HepG2 (cell line): ENCODE measurements at regions of chr14 and their contacts with region 1.

Region 1: GRCh38 chr14:21014761-21015190 is 10.1 kb downstream of the NDRG2 start:
- DNase-seq: peak; percentile 94
- ATAC-seq: peak; percentile 90
- H3K4me3 ChIP-seq: no peak overlapping the region
- H3K27ac ChIP-seq: no peak overlapping the region
- H3K4me1 ChIP-seq: peaks cover 36% of the 10 kb centered on the region
- H3K27me3 ChIP-seq: peaks cover 0 to 3% of the 10 kb centered on the region in 2 experiments; a peak in 1 of 5 replicates
- CTCF ChIP-seq: peak; percentile 99
- EP300 ChIP-seq: peak in 1 of 2 experiments; percentile 40; a peak in 1 of 4 replicates
- POLR2A ChIP-seq: 0 out of 4 replicates have a peak, but pooled peaks of 1 of the 2 experiments have one; percentile 23
- RAD21 ChIP-seq: peak; percentile 99

Region 2: DNA sequence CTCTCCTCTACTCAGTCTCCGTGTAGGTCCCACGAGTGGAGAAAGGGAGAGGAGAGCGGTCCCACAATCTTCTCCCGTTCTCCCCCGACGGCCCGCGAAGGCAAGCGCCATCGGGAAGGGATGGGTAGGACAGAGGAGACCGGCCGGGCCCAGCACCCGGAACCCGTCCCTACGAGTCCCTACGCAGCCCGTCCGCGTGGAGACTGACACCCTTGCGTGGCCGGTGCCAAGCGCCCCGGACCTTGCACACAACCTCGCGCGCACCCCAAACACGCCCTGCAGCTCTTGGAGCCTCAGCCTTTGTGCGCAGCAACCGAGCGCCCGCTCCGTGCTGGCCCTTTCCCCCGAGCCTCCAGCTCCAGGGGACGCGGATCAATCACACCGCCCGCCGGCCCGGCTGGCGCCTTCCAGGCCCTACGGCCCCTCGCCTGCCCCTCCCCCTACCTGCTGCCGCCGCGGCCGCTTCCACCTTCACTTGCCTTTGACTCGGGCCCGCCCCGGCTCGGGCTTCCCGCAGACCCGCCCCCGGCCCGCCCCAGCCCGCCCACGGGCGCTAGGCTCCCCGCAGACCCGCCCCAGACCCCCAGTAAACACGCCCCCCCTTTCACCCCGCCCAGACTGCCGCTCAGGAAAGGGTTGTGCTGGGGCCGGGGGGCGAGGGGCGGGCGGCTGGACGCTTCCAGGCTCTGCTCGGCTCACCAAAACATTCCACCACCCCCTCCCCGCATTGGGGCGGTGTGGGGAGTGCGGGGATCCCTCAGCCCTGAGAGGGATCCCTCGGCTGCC is 10.0 kb after region 1 on chr14 and contains the start of gene NDRG2:
- CTCF ChIA-PET with region 1: interaction called, 3 read pairs
- POLR2A ChIA-PET with region 1: interaction called, 16 read pairs
- in situ Hi-C with region 1: no loop called
- intact Hi-C with region 1: no loop called
- DNase-seq: peak; percentile 84
- ATAC-seq: peak; percentile 90
- H3K4me3 ChIP-seq: peak within 1 kb of the TSS; percentile 65 to 96 (median 94)
- H3K27ac ChIP-seq: peak within 1 kb of the TSS; percentile 83
- H3K4me1 ChIP-seq: peaks cover 50% of the 10 kb centered on the region
- H3K27me3 ChIP-seq: no peaks in the 10 kb centered on the region; a peak in 1 of 5 replicates
- CTCF ChIP-seq: peak; percentile 7; the same call in 1 of the 2 replicates
- EP300 ChIP-seq: peak; percentile 41 to 77; a peak in 3 of 4 replicates
- POLR2A ChIP-seq: peak; percentile 78 to 80
- RAD21 ChIP-seq: peak; percentile 58
- total RNA-seq, gene NDRG2: 27.2 and 27.4 TPM in 2 replicates

Region 3: GRCh38 chr14:21057803-21058675 is 43.3 kb after region 1 on chr14 and contains the start of gene RNASE8:
- CTCF ChIA-PET with region 1: interaction called, 12 read pairs
- POLR2A ChIA-PET with region 1: interaction called, 26 read pairs
- in situ Hi-C with region 1: no loop called
- intact Hi-C with region 1: loop called (anchors 1 kb)
- DNase-seq: no peak
- ATAC-seq: no peak
- H3K4me3 ChIP-seq: no peak within 1 kb of the TSS; a peak in 1 of 6 replicates
- H3K27ac ChIP-seq: peak within 1 kb of the TSS; percentile 92
- H3K4me1 ChIP-seq: peaks cover 99% of the 10 kb centered on the region
- H3K27me3 ChIP-seq: no peaks in the 10 kb centered on the region
- CTCF ChIP-seq: peak; percentile 56
- EP300 ChIP-seq: no peak
- POLR2A ChIP-seq: no peak
- RAD21 ChIP-seq: no peak
- total RNA-seq, gene RNASE8: not detected in 2 replicates

Region 4: GRCh38 chr14:21092273-21093011 is 77.7 kb after region 1 on chr14:
- CTCF ChIA-PET with region 1: interaction called, 174 read pairs
- POLR2A ChIA-PET with region 1: interaction called, 19 read pairs
- in situ Hi-C with region 1: no loop called
- intact Hi-C with region 1: loop called (anchors 1 kb)
- DNase-seq: peak; percentile 72
- ATAC-seq: peak; percentile 68
- H3K4me3 ChIP-seq: no peak overlapping the region
- H3K27ac ChIP-seq: peak overlapping the region; percentile 1
- H3K4me1 ChIP-seq: peaks cover 38% of the 10 kb centered on the region
- H3K27me3 ChIP-seq: no peaks in the 10 kb centered on the region; a peak in 1 of 5 replicates
- CTCF ChIP-seq: peak; percentile 100
- EP300 ChIP-seq: peak in 1 of 2 experiments; percentile 70; a peak in 1 of 4 replicates
- POLR2A ChIP-seq: no peak
- RAD21 ChIP-seq: peak; percentile 100

Region 5: DNA sequence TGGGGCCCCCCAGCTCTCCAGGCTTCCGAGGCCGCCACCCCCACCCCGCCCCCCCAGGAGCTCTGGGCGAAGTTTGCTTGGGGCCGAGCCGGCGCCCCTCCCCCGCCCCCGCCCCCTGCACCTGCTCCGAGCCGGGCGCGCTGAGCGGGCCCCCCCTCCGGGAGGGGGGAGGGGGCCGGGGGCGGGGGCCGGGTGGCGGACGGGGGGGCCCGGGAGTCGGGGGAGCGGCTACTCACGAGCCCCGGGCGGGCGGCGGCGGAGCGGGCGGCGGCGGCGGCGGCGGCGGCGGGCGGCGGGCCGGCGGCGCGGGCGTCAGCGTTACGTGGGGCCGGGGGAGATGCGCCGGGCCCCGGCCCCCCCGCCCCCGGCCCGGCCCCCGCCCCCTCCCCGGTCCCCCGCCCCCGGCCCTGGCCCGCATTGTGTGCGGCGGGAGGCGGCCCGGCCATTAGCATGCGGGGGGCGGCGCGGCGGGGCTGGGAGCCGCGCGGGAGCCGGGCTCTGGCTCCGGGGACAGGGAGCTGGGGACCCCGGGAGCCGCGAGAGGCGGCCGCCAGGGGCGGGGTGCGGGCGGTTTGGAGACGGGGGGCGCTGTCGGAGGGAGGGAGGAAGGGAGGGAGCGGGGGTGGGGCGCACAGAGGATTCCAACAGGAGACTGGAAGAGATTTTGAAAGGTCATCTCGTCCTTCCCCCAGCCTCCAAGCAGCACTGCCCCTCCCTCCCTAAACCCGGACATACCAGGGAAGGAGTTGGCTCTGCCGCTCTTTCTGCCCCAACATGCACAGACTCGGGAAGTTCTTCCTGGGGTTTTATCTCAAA is 83.5 kb after region 1 on chr14 and contains the start of gene ZNF219:
- CTCF ChIA-PET with region 1: interaction called, 174 read pairs
- POLR2A ChIA-PET with region 1: interaction called, 41 read pairs
- in situ Hi-C with region 1: loop called (anchors 5 kb)
- intact Hi-C with region 1: no loop called
- DNase-seq: peak; percentile 74
- ATAC-seq: peak; percentile 57
- H3K4me3 ChIP-seq: peak within 1 kb of the TSS; percentile 67 to 85 (median 83)
- H3K27ac ChIP-seq: peak within 1 kb of the TSS; percentile 70
- H3K4me1 ChIP-seq: peaks cover 82% of the 10 kb centered on the region
- H3K27me3 ChIP-seq: no peaks in the 10 kb centered on the region; a peak in 1 of 5 replicates
- CTCF ChIP-seq: no peak; the same call in 1 of the 2 replicates
- EP300 ChIP-seq: no peak; a peak in 1 of 4 replicates
- POLR2A ChIP-seq: peak in 1 of 2 experiments; percentile 39; a peak in 1 of 4 replicates
- RAD21 ChIP-seq: no peak
- total RNA-seq, gene ZNF219: 21.0 and 36.6 TPM in 2 replicates

Region 6: GRCh38 chr14:21103710-21104447 is 89.1 kb after region 1 on chr14:
- CTCF ChIA-PET with region 1: interaction called, 31 read pairs
- POLR2A ChIA-PET with region 1: interaction called, 41 read pairs
- in situ Hi-C with region 1: loop called (anchors 5 kb)
- intact Hi-C with region 1: loop called (anchors 1 kb)
- DNase-seq: peak; percentile 98
- ATAC-seq: peak; percentile 83
- H3K4me3 ChIP-seq: peak overlapping the region; percentile 61 to 82 (median 66)
- H3K27ac ChIP-seq: peak overlapping the region; percentile 97
- H3K4me1 ChIP-seq: peaks cover 80% of the 10 kb centered on the region
- H3K27me3 ChIP-seq: no peaks in the 10 kb centered on the region; a peak in 1 of 5 replicates
- CTCF ChIP-seq: peak; percentile 95
- EP300 ChIP-seq: peak in 1 of 2 experiments; percentile 76; a peak in 2 of 4 replicates
- POLR2A ChIP-seq: peak in 1 of 2 experiments; percentile 95; a peak in 2 of 4 replicates
- RAD21 ChIP-seq: peak; percentile 74